ENCODE measurements at regions of chr4 and their contacts with region 1.

Region 1: DNA sequence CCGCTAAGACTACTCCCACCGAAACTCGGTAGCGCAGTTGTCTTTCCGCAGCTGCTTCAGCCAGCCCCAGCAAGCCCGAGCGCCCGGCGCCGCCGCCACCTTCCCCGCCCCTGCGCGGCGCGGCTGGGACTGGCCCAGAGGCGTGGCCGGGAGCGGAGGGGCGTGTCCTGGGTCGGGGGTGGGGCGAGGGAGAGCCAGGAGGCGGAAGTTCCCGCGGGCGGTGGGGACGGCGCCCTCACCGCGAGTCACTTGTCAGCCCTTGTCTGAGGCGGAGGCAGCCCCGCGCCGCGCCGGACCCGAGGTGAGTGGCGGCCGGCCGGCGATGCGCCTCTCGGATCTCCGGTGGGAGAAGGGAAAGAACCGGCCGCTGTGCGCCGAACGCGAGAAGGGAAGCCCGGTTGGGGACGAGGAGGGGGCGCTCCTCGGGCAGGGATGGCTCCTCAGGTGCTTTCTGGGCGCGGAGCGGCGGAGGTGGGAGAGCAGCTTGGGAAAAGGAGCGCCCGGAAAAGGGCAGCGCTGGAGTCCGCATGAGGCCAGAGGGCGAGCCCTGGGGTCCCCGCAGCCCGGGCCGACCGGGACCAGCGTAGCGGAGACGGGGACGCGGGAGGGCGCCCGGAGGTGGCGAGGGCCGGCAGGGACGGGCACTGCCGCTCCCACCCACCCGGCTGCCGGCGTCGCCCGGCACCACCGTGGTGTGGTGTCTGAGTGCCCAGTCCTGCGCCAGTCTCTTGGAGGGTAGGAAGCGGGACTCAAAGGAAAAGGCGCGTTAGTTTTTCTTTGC is at the start of gene PDLIM5:
- DNase-seq: peak; percentile 44 to 92 (median 82)
- H3K4me3 ChIP-seq: peak within 1 kb of the TSS; percentile 66 to 99 (median 91)
- H3K27ac ChIP-seq: peak within 1 kb of the TSS; percentile 27 to 97 (median 89)
- H3K27me3 ChIP-seq: peaks cover 0 to 2% (median 0%) of the 10 kb centered on the region in 45 donors
- CTCF ChIP-seq: peak in 34 of 56 donors; percentile 6 to 56 (median 24)
- total RNA-seq, gene PDLIM5: 31.7 to 134 (median 55.5) TPM

Region 2: DNA sequence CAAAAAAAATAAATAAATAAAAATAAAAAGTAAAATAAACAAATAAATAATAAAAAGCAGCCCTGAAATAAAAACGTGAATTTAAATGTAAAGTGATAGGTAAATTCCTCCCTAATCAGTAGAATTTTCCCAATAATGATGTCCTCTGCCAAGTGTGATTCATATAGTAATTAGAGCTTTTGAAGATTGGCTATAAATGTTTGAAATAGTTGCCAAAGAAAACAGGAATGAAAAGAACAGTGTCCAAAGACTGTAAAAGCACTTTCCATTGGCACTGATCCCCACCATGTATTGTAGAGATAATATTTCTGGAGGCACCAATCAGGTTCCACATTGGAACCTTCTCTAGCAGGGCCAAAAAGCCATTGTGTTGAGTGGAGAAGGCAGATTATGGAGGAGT is 270.1 kb before region 1 on chr4:
- intact Hi-C with region 1: no loop called
- DNase-seq: no peak
- H3K4me3 ChIP-seq: no peak overlapping the region
- H3K27ac ChIP-seq: no peak overlapping the region
- H3K27me3 ChIP-seq: peaks cover 0 to 8% (median 0%) of the 10 kb centered on the region in 45 donors
- CTCF ChIP-seq: no peak

Region 3: DNA sequence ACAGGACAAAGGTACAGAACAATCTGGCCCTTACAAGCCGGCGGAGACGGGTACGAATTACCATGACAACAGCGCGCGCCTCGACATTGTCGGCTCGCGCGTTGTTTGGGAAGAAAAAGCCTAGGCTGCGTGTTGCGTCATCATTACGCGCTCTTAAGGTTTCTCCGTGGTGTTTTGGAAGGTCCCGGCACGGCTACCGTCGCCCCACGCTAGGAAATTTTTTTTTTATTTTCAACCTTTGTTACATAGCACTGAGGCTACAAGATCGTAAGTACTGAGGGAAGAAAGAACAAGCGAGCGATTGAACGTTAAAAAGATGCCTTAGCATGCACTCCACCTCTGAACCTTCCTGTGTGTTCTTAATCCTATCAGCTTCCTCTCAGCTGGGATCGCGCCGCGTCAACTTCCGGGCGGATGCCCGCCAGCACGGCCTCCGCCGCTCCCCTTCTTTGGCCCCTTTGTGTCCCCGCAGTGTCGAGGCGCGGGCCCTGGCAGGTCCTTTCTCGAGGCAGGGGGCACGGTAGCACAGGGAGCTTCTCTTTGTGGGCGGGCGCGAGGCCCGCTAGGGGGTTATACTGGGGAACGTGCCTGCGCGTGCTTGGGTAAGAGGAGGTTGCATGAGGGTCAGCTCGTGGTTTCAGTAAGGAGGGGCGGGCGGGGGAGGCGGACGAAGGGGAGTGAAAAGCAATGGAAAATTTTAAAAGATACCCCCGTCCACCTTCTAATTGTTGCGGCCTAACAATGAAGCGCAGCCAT is 244.2 kb before region 1 on chr4 and contains the start of gene SMARCAD1:
- intact Hi-C with region 1: no loop called
- DNase-seq: peak; percentile 66 to 93 (median 86)
- H3K4me3 ChIP-seq: peak within 1 kb of the TSS; percentile 61 to 96 (median 81)
- H3K27ac ChIP-seq: peak within 1 kb of the TSS; percentile 65 to 97 (median 91)
- H3K27me3 ChIP-seq: no peaks in the 10 kb centered on the region
- CTCF ChIP-seq: peak in 20 of 56 donors; percentile 5 to 30 (median 12)
- total RNA-seq, gene SMARCAD1: 21.5 to 41.8 (median 31.9) TPM

Region 4: DNA sequence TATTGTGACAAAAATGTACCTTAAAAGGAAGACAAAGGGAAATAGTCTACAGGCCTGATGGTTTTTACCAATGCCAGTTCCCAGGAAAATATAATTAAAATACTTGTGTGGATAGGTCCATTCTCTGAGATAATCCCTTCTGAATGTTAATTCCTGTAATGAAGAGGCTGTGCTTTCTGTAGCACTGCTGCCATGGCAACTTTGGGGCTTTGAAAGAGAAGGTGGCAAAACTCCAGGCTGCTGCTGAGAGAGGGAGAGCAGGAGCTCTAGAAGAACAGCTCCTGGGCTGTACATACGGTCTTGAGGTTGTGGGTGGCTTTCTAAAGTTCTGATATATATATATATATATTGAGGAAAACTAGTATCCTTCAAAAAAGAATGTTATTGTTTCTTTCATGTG is 125.3 kb after region 1 on chr4:
- intact Hi-C with region 1: loop called in 1 of 2 experiments (anchors 10 kb)
- DNase-seq: peak in 9 of 10 donors; percentile 12 to 72 (median 58)
- H3K4me3 ChIP-seq: peak overlapping the region in 28 of 59 donors; percentile 3 to 44 (median 22)
- H3K27ac ChIP-seq: peak overlapping the region in 20 of 59 donors; percentile 4 to 61 (median 30)
- H3K27me3 ChIP-seq: no peaks in the 10 kb centered on the region
- CTCF ChIP-seq: no peak

Region 5: GRCh38 chr4:95674521-95674981 is 1222.7 kb after region 1 on chr4:
- intact Hi-C with region 1: no loop called
- DNase-seq: no peak
- H3K4me3 ChIP-seq: no peak overlapping the region
- H3K27ac ChIP-seq: no peak overlapping the region
- H3K27me3 ChIP-seq: no peaks in the 10 kb centered on the region
- CTCF ChIP-seq: no peak